ENCODE measurements at regions of chr16 and their contacts with region 1.

Region 1: DNA sequence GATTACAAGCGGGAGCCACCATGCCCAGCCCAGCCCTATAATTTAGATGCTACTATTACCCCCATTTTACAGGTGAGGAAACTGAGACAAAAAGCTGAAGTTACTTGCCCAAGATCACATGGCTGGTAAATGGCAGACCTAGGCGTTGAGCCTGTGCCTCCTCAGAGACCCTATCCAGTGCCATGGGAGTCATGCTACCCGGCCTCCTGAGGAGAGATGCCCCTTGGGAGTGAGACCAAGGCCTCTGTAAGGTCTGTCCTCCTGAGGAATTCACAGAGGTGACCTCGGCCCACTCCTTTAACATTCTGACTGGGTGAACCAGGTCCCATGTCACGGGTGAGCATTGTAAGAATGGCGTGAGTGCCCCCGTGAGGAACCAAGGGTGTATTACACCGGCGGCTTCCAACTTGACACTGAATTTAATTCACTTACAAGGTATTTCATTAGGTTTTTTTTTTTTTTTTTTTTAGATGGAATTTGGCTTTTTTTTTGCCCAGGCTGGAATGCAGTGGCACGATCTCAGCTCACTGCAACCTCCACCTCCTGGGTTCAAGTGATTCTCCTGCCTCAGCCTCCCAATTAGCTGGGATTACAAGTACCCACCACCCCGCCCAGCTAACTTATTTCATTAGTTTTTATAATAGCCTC is 95.7 kb downstream of the ABCC6 start:
- DNase-seq: peak; percentile 94
- H3K4me3 ChIP-seq: no peak overlapping the region
- H3K27ac ChIP-seq: peak overlapping the region; percentile 73 to 82 (median 80)
- H3K4me1 ChIP-seq: peaks cover 0 to 43% (median 32%) of the 10 kb centered on the region in 4 donors
- H3K27me3 ChIP-seq: no peaks in the 10 kb centered on the region
- CTCF ChIP-seq: peak; percentile 92 to 97 (median 92)
- EP300 ChIP-seq: no peak
- POLR2A ChIP-seq: no peak

Region 2: DNA sequence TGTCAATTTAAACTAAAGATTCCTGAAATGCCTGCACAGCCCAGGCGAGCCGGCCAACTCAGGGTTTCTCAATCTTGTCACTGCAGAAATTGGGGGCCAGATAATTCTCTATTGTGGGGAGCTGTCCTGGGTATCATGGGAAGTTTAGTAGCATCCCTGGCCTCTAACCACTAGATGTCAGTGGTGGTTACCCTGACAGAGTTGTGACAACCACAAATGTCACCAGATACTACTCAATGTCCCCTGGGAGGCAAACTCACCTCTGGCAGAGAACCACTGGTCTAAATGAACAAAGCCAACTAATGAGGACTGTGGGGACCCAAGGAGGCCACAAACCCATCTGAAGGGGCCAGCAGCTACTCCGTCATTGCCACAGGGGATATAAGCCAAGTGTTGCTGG is 361.7 kb before region 1 on chr16:
- intact Hi-C with region 1: loop called (anchors 10 kb)
- DNase-seq: no peak
- H3K4me3 ChIP-seq: no peak overlapping the region
- H3K27ac ChIP-seq: peak overlapping the region; percentile 63 to 75 (median 74)
- H3K4me1 ChIP-seq: peaks cover 0 to 97% (median 88%) of the 10 kb centered on the region in 4 donors
- H3K27me3 ChIP-seq: no peaks in the 10 kb centered on the region
- CTCF ChIP-seq: peak; percentile 35 to 53 (median 40)
- EP300 ChIP-seq: no peak
- POLR2A ChIP-seq: no peak

Region 3: GRCh38 chr16:15857724-15858560 is 269.7 kb before region 1 on chr16:
- intact Hi-C with region 1: no loop called
- DNase-seq: no peak
- H3K4me3 ChIP-seq: peak overlapping the region; percentile 67 to 79 (median 72)
- H3K27ac ChIP-seq: peak overlapping the region; percentile 95 to 98 (median 95)
- H3K4me1 ChIP-seq: peaks cover 16 to 60% (median 47%) of the 10 kb centered on the region in 4 donors
- H3K27me3 ChIP-seq: peaks cover 0 to 19% (median 0%) of the 10 kb centered on the region in 4 donors
- CTCF ChIP-seq: peak in 1 of 3 experiments; percentile 7
- EP300 ChIP-seq: no peak
- POLR2A ChIP-seq: no peak

Region 4: GRCh38 chr16:15874745-15875314 is 252.8 kb before region 1 on chr16:
- intact Hi-C with region 1: loop called (anchors 5 kb)
- DNase-seq: no peak
- H3K4me3 ChIP-seq: no peak overlapping the region
- H3K27ac ChIP-seq: peak overlapping the region; percentile 67 to 95 (median 81)
- H3K4me1 ChIP-seq: peaks cover 15 to 66% (median 59%) of the 10 kb centered on the region in 4 donors
- H3K27me3 ChIP-seq: no peaks in the 10 kb centered on the region
- CTCF ChIP-seq: peak; percentile 63 to 74 (median 65)
- EP300 ChIP-seq: no peak
- POLR2A ChIP-seq: no peak

Region 5: GRCh38 chr16:15949210-15950160 is 178.1 kb before region 1 on chr16 and contains the start of gene ABCC1:
- intact Hi-C with region 1: loop called (anchors 5 kb)
- DNase-seq: no peak
- H3K4me3 ChIP-seq: peak within 1 kb of the TSS; percentile 93 to 99 (median 94)
- H3K27ac ChIP-seq: peak within 1 kb of the TSS; percentile 93 to 98 (median 95)
- H3K4me1 ChIP-seq: peaks cover 24 to 60% (median 50%) of the 10 kb centered on the region in 4 donors
- H3K27me3 ChIP-seq: no peaks in the 10 kb centered on the region
- CTCF ChIP-seq: peak in 1 of 3 experiments; percentile 26
- EP300 ChIP-seq: no peak
- POLR2A ChIP-seq: no peak
- total RNA-seq, gene ABCC1: 61.8 to 141 (median 103) TPM

Region 6: DNA sequence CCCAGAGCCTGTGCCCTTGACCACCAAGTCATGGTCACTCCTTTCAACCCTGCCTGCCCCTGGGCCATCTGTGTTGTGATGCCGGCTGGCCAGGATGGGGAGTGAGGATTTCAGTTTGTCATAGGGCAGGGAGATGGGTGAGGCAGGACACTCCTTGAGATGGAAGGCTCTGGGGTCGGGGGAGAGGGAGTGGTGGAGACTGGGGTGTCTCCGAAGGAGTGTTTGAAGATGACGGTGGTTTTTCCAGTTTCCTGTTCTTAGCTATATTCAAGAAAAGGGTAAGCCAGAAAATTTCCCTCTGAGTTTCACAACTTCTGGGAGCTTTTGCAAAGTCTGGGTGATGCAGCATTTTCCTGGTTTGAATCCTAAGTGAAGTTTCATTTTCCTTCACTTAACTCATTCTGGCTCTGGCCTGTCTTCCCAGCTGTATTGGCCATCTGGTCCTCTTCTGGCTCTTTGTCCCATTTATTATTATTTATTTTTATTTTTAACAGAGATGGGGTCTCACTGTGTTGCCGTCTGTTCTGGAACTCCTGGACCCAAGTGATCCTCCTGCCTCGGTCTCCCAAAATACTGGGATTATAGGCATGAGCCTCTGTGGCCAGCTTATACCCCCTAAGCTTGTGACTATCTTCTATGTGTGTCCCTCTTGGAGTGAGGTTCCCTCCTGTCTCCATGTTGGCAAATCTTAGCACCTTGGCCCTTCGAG is 150.5 kb before region 1 on chr16:
- intact Hi-C with region 1: no loop called
- DNase-seq: no peak
- H3K4me3 ChIP-seq: no peak overlapping the region
- H3K27ac ChIP-seq: peak overlapping the region; percentile 82 to 89 (median 86)
- H3K4me1 ChIP-seq: peaks cover 40 to 100% (median 87%) of the 10 kb centered on the region in 4 donors
- H3K27me3 ChIP-seq: no peaks in the 10 kb centered on the region
- CTCF ChIP-seq: no peak
- EP300 ChIP-seq: no peak
- POLR2A ChIP-seq: no peak

Measured in esophagus muscularis mucosa (tissue), 4 donors.